Calu3 (cell line): ENCODE measurements at regions of chr4 and their contacts with region 1.

Region 1: DNA sequence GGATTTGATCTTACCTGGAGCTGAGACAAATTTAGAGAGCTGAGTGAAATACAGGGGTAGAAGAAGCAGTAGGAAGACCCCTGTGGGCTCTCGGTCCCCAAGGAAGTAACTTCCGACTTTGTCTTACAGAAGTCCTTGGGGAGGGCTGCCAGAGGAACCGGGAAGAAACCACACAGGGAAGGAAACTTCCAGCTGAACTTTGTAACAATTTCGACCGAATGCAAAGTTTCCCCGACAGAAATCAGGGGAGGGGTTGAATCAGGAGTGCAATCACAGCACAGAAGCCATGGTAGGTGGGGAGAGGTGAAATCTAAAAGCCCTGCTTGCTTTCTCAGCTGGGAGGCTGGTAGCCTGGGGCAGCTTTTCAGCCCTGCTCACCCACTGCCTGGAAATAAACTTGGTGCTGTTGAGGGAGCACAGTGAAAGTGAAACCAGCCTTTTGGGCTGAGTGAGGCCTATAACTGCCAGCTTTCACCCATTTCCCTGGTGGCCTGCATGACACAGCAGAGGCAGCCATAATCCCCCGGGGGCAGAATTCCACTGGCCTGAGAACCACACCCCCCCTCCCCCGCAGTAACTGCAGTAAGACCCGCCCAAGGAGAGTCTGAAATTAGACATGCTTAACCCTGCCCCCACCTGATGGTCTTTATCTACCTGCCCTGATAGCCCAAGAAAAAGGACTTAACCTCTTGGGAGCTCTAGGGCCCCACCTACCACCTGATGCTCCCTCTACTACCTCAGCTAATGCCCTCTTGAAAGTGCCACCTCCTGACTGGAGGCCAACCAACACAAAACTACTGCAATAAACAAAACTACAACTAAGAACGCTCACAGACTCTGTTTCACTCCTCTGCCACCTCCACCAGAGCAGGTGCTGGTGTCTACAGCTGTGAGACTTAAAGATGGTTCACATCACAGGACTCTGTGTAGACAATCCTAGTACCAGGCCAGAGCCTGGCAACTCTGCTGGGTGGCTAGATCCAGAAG is 248.2 kb downstream of the PARM1 start:
- DNase-seq: peak; percentile 44
- H3K4me3 Mint-ChIP-seq: peak overlapping the region; percentile 53
- H3K27ac Mint-ChIP-seq: peak overlapping the region; percentile 76
- H3K4me1 Mint-ChIP-seq: peaks cover 17% of the 10 kb centered on the region
- H3K27me3 Mint-ChIP-seq: no peaks in the 10 kb centered on the region
- CTCF ChIP-seq: no peak

Region 2: GRCh38 chr4:75248770-75249407 is 67.8 kb after region 1 on chr4:
- CTCF ChIA-PET with region 1: no interaction called
- intact Hi-C with region 1: loop called (anchors 2 kb)
- DNase-seq: peak; percentile 6
- H3K4me3 Mint-ChIP-seq: no peak overlapping the region
- H3K27ac Mint-ChIP-seq: peak overlapping the region; percentile 65
- H3K4me1 Mint-ChIP-seq: peaks cover 13% of the 10 kb centered on the region
- H3K27me3 Mint-ChIP-seq: no peaks in the 10 kb centered on the region
- CTCF ChIP-seq: no peak

Region 3: GRCh38 chr4:75321484-75321883 is 140.4 kb after region 1 on chr4:
- CTCF ChIA-PET with region 1: no interaction called
- intact Hi-C with region 1: no loop called
- DNase-seq: no peak
- H3K4me3 Mint-ChIP-seq: no peak overlapping the region
- H3K27ac Mint-ChIP-seq: no peak overlapping the region
- H3K4me1 Mint-ChIP-seq: no peaks in the 10 kb centered on the region
- H3K27me3 Mint-ChIP-seq: peaks cover 58% of the 10 kb centered on the region
- CTCF ChIP-seq: no peak

Region 4: GRCh38 chr4:75398501-75398900 is 217.4 kb after region 1 on chr4:
- CTCF ChIA-PET with region 1: interaction called, 10 read pairs
- intact Hi-C with region 1: no loop called
- DNase-seq: no peak
- H3K4me3 Mint-ChIP-seq: no peak overlapping the region
- H3K27ac Mint-ChIP-seq: no peak overlapping the region
- H3K4me1 Mint-ChIP-seq: no peaks in the 10 kb centered on the region
- H3K27me3 Mint-ChIP-seq: peaks cover 47% of the 10 kb centered on the region
- CTCF ChIP-seq: no peak

Region 5: GRCh38 chr4:75790024-75790423 is 608.9 kb after region 1 on chr4:
- CTCF ChIA-PET with region 1: no interaction called
- intact Hi-C with region 1: no loop called
- DNase-seq: no peak
- H3K4me3 Mint-ChIP-seq: no peak overlapping the region
- H3K27ac Mint-ChIP-seq: no peak overlapping the region
- H3K4me1 Mint-ChIP-seq: no peaks in the 10 kb centered on the region
- H3K27me3 Mint-ChIP-seq: no peaks in the 10 kb centered on the region
- CTCF ChIP-seq: no peak

Region 6: GRCh38 chr4:75892508-75892907 is 711.4 kb after region 1 on chr4:
- CTCF ChIA-PET with region 1: no interaction called
- intact Hi-C with region 1: no loop called
- DNase-seq: peak; percentile 27
- H3K4me3 Mint-ChIP-seq: no peak overlapping the region
- H3K27ac Mint-ChIP-seq: no peak overlapping the region
- H3K4me1 Mint-ChIP-seq: no peaks in the 10 kb centered on the region
- H3K27me3 Mint-ChIP-seq: peaks cover 34% of the 10 kb centered on the region
- CTCF ChIP-seq: no peak